ENCODE measurements at regions of chr11 and their contacts with region 1.

Region 1: DNA sequence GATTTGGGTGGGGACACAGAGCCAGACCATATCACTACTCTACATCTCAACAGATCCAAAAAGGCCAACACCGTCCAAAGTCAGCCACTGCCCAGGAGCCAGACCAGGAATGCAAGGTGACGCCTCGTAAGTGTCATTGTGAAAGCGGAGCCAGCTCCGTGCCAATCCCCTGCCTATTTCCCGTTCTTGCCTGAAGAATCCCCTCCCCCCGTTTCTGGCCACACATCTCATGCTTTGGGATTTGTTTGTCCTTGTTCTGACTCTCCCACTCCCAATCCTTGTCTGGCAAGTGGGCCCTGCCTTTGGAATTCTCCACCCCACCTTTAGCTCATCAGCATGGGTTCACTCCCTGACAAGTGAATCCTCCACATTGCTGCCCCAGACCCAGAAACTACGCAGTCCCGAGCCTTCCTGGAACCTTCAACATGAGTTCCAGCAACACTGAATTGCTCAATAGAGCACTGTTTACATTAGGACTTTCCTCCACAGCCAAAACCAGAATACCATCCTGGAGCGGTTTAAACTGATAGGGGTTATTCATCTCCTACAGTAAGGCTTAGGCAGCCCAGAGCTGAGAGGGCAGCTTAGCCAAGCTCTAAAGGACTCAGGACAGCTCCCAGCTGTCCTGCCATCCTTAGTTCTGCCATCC is 6.0 kb upstream of the SLC35C1 start:
- DNase-seq: no peak
- H3K4me3 Mint-ChIP-seq: no peak overlapping the region
- H3K27ac Mint-ChIP-seq: no peak overlapping the region
- H3K4me1 Mint-ChIP-seq: peaks cover 7% of the 10 kb centered on the region
- H3K27me3 Mint-ChIP-seq: peaks cover 10% of the 10 kb centered on the region
- CTCF ChIP-seq: no peak

Region 2: DNA sequence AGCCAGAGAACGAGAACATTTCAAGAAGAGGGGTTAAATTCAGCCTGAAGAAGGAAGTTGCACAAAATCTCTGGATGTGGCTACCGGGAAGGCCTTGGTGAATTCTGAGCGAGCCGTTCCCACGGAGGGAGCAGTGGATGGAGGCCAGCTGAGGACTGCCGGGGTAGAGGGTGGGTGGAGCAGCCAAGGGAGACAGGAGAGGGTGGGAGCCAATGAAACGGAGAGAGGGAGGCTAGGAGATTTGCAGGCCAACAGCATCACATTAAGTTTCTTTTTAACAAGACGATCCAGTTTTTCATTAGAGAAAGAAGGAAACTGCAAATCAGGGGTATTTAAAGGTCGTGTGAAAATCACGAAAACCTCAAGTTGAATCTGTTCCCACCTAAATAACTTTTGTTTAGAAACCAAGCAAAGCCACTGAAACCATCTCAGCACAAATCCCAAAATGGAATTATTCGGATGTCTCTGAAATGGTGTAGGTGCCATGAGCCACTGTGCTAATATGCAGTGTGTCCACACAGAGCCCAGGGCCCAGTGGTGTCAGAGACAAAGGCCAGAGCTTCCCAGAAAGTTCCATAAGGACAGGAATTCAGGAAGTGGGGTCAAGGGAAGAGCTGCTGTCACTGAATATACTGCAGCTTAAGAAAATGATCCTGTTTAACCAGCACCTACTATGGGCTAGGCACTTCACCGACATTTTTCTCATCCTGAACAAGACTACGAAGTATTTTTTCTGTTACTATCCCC is 53.7 kb before region 1 on chr11:
- CTCF ChIA-PET with region 1: no interaction called
- intact Hi-C with region 1: loop called (anchors 5 kb)
- DNase-seq: no peak
- H3K4me3 Mint-ChIP-seq: no peak overlapping the region
- H3K27ac Mint-ChIP-seq: no peak overlapping the region
- H3K4me1 Mint-ChIP-seq: no peaks in the 10 kb centered on the region
- H3K27me3 Mint-ChIP-seq: peaks cover 93% of the 10 kb centered on the region
- CTCF ChIP-seq: no peak

Region 3: DNA sequence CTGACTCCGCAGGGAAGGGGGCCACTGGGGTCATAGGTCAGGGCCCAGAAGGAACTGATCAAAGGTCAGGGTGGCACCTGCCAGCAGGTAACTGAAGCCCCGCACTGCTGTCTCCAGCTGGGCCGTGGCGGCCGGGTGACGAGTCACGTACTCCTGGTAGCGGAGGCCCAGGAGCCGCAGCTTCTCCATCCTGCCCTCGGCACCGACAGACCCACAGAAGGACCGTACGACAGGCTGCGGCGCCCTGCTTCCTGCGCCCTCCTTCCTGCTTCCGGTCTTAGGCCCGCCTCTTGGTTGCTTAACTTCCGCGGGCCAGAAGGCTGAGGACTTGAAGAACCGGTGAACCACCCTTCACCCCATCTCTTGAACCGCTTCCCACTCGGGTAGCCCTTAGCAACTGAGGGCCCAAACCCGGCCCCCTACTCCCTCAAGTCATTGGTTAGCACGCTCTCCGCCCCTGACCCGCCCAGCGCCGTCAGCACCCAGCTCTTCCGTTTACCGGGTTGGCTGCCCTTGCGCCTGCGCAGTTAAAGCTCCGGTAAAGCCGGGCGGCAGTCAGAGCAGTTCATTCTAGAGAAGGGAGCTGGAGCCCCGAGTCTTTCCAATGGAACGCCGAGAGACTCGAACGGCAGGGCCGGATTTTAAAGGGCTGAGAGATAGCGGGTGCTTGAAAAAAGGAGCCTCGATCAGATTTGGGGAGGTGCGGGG is 118.9 kb after region 1 on chr11 and contains the start of gene PEX16:
- CTCF ChIA-PET with region 1: no interaction called
- intact Hi-C with region 1: no loop called
- DNase-seq: peak; percentile 97
- H3K4me3 Mint-ChIP-seq: peak within 1 kb of the TSS; percentile 86
- H3K27ac Mint-ChIP-seq: peak within 1 kb of the TSS; percentile 91
- H3K4me1 Mint-ChIP-seq: peaks cover 9% of the 10 kb centered on the region
- H3K27me3 Mint-ChIP-seq: no peaks in the 10 kb centered on the region
- CTCF ChIP-seq: no peak
- total RNA-seq, gene PEX16: 32.9 and 34.5 TPM in 2 replicates